ENCODE measurements at regions of chr15 and their contacts with region 1.

Region 1: GRCh38 chr15:65156692-65157091 is 23.1 kb upstream of the PDCD7 start:
- DNase-seq: no peak
- H3K4me3 ChIP-seq: no peak overlapping the region
- H3K27ac ChIP-seq: no peak overlapping the region
- H3K4me1 ChIP-seq: no peaks in the 10 kb centered on the region
- H3K27me3 ChIP-seq: no peaks in the 10 kb centered on the region
- CTCF ChIP-seq: no peak

Region 2: DNA sequence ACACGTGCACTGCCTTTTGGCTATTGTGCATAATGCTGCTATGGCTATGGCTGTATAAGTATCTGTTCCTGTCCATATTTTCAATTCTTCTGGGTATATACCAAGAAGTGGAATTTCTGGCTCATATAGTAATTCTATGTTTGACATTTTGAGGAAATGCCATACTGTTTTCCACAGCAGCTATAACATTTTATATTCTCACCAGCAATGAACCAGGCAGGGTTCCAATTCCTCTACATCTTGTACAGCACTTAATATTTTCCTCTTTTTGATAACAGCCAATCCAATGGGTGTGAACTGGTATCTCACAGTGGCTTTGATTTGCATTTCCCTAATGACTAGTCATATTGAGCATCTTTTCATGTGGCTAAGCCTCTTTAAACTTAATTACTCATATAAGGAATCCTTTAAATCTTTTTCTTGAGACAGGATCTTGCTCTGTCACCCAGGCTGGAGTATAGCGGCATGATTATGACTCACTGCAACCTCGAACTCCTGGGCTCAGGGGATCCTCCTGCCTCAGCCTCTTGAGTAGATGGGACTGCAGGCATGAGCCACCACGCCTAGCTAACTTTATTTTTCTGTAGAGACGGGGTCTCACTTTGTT is 304.2 kb after region 1 on chr15:
- intact Hi-C with region 1: loop called (anchors 10 kb)
- DNase-seq: no peak
- H3K4me3 ChIP-seq: no peak overlapping the region
- H3K27ac ChIP-seq: no peak overlapping the region
- H3K4me1 ChIP-seq: no peaks in the 10 kb centered on the region
- H3K27me3 ChIP-seq: no peaks in the 10 kb centered on the region
- CTCF ChIP-seq: no peak